Transverse colon (tissue), 4 donors: ENCODE measurements at regions of chr3 and their contacts with region 1.

Region 1: GRCh38 chr3:55128231-55128791 is 200.5 kb upstream of the LRTM1 start:
- DNase-seq: no peak
- H3K4me3 ChIP-seq: no peak overlapping the region
- H3K27ac ChIP-seq: no peak overlapping the region
- H3K4me1 ChIP-seq: no peaks in the 10 kb centered on the region
- H3K27me3 ChIP-seq: no peaks in the 10 kb centered on the region
- CTCF ChIP-seq: no peak
- EP300 ChIP-seq: no peak
- POLR2A ChIP-seq: no peak

Region 2: DNA sequence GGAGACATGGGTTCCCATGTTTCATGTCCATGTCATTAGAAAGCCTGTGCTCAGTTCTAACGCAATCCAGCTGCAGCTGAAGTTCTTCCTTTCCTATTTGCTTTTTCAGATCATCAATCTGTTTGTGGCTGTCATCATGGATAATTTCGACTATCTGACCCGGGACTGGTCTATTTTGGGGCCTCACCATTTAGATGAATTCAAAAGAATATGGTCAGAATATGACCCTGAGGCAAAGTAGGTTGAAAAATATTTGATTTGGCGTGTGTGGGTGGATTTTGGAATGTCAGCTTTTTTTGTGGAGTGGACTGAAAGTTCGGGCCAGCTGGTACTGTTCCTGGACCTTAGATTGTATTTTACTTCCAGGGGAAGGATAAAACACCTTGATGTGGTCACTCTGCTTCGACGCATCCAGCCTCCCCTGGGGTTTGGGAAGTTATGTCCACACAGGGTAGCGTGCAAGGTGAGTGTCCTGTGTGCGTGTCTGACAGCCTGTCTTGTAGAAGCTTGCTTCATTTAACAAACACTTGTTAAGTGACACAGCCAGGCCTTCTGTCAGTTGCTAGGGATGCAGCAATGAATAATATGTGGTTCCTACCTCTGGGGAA is 1351.7 kb before region 1 on chr3:
- in situ Hi-C with region 1: no loop called
- intact Hi-C with region 1: loop called (anchors 5 kb)
- DNase-seq: no peak
- H3K4me3 ChIP-seq: no peak overlapping the region
- H3K27ac ChIP-seq: no peak overlapping the region
- H3K4me1 ChIP-seq: no peaks in the 10 kb centered on the region
- H3K27me3 ChIP-seq: no peaks in the 10 kb centered on the region
- CTCF ChIP-seq: no peak
- EP300 ChIP-seq: no peak
- POLR2A ChIP-seq: no peak